ENCODE measurements at regions of chr20 and their contacts with region 1.

Region 1: GRCh38 chr20:31560094-31560899 is 44.8 kb upstream of the ID1 start:
- DNase-seq: peak; percentile 76
- H3K4me3 ChIP-seq: no peak overlapping the region
- H3K27ac ChIP-seq: peak overlapping the region; percentile 39 to 72 (median 48)
- H3K4me1 ChIP-seq: peaks cover 0 to 23% (median 8%) of the 10 kb centered on the region in 4 donors
- H3K27me3 ChIP-seq: no peaks in the 10 kb centered on the region
- CTCF ChIP-seq: peak; percentile 85 to 92 (median 88)
- EP300 ChIP-seq: no peak
- POLR2A ChIP-seq: no peak

Region 2: DNA sequence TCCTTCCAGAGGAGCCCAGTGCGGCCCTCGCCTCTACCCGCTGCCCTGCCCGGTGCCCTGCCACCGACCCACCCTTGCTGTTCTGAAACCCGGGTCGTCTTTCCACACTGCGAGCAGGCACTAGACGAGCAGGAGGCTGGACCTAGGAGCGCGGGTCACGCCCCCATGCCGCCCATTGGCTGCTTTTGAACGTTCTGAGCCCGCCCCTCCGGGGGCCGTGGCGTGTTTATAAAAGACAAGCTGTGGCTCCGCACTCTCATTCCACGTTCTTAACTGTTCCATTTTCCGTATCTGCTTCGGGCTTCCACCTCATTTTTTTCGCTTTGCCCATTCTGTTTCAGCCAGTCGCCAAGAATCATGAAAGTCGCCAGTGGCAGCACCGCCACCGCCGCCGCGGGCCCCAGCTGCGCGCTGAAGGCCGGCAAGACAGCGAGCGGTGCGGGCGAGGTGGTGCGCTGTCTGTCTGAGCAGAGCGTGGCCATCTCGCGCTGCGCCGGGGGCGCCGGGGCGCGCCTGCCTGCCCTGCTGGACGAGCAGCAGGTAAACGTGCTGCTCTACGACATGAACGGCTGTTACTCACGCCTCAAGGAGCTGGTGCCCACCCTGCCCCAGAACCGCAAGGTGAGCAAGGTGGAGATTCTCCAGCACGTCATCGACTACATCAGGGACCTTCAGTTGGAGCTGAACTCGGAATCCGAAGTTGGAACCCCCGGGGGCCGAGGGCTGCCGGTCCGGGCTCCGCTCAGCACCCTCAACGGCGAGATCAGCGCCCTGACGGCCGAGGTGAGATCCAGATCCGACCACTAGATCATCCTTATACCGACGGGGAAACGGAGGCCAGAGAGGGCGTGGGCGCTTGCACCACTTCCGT is 45.0 kb after region 1 on chr20 and contains the start of gene ID1:
- in situ Hi-C with region 1: loop called (anchors 5 to 10 kb)
- intact Hi-C with region 1: no loop called
- DNase-seq: peak; percentile 97
- H3K4me3 ChIP-seq: peak within 1 kb of the TSS; percentile 61 to 85 (median 72)
- H3K27ac ChIP-seq: peak within 1 kb of the TSS; percentile 91 to 93 (median 92)
- H3K4me1 ChIP-seq: peaks cover 19 to 56% (median 48%) of the 10 kb centered on the region in 4 donors
- H3K27me3 ChIP-seq: no peaks in the 10 kb centered on the region
- CTCF ChIP-seq: peak in 1 of 5 experiments; percentile 8
- EP300 ChIP-seq: no peak
- POLR2A ChIP-seq: peak; percentile 100
- total RNA-seq, gene ID1: 516 to 1,015 (median 933) TPM

Region 3: GRCh38 chr20:31617432-31618104 is 57.3 kb after region 1 on chr20:
- in situ Hi-C with region 1: loop called (anchors 5 to 10 kb)
- intact Hi-C with region 1: loop called (anchors 2 kb)
- DNase-seq: no peak
- H3K4me3 ChIP-seq: no peak overlapping the region
- H3K27ac ChIP-seq: no peak overlapping the region
- H3K4me1 ChIP-seq: peaks cover 2 to 8% (median 6%) of the 10 kb centered on the region in 4 donors
- H3K27me3 ChIP-seq: no peaks in the 10 kb centered on the region
- CTCF ChIP-seq: no peak
- EP300 ChIP-seq: no peak
- POLR2A ChIP-seq: no peak

Measured in transverse colon (tissue), 4 donors.